ENCODE measurements at regions of chr1 and their contacts with region 1.

Region 1: DNA sequence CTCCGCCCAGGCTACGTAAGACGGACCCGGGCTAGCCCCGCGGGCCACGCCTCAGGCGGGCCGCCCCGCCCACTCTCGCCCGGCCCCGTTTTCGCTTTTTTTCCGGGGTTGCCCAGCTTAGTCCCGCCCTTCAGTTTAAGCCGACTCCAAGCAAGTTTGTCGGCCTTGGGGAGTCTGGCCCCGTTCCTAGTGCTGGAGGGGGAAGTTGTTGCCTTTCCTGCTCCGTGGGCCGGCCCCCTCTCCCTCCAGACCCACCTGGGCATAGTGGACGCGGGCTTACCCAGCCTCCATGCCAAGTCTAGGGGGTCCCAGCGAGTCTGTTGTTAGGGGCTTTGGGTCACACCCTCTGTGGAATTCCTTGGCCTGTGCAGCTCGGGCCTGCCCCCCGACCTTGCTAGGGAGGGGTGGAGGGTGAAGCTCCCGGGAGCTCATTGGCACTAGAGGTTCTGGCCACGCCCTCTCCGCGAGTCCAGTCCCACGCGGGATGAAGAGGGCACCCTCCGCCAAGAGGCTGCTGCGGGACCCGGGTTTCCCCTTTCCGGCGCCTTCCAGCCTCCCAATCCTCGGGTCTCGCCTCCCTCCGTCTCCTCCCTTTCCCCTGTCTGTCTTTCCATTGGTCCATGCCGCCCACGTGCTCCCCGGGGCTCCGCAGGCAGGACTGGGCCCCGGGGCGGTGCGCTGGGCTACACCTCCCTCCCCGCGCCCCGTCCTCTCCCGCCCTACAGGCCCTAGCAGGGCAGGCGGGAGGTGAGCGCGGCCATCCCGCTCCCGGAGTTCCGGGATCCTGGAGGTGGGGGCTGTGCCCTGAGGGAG is 3.3 kb downstream of the RUSC1 start:
- DNase-seq: peak; percentile 96
- H3K4me3 ChIP-seq: peak overlapping the region; percentile 85
- H3K27ac ChIP-seq: peak overlapping the region; percentile 99
- H3K4me1 ChIP-seq: peaks cover 55% of the 10 kb centered on the region
- H3K27me3 ChIP-seq: no peaks in the 10 kb centered on the region
- CTCF ChIP-seq: no peak

Region 2: GRCh38 chr1:155063550-155064110 is 260.4 kb before region 1 on chr1 and contains the start of gene EFNA4:
- intact Hi-C with region 1: no loop called
- DNase-seq: peak; percentile 82
- H3K4me3 ChIP-seq: peak within 1 kb of the TSS; percentile 81
- H3K27ac ChIP-seq: peak within 1 kb of the TSS; percentile 78
- H3K4me1 ChIP-seq: peaks cover 47% of the 10 kb centered on the region
- H3K27me3 ChIP-seq: no peaks in the 10 kb centered on the region
- CTCF ChIP-seq: no peak
- total RNA-seq, gene EFNA4: 1.7 TPM

Region 3: DNA sequence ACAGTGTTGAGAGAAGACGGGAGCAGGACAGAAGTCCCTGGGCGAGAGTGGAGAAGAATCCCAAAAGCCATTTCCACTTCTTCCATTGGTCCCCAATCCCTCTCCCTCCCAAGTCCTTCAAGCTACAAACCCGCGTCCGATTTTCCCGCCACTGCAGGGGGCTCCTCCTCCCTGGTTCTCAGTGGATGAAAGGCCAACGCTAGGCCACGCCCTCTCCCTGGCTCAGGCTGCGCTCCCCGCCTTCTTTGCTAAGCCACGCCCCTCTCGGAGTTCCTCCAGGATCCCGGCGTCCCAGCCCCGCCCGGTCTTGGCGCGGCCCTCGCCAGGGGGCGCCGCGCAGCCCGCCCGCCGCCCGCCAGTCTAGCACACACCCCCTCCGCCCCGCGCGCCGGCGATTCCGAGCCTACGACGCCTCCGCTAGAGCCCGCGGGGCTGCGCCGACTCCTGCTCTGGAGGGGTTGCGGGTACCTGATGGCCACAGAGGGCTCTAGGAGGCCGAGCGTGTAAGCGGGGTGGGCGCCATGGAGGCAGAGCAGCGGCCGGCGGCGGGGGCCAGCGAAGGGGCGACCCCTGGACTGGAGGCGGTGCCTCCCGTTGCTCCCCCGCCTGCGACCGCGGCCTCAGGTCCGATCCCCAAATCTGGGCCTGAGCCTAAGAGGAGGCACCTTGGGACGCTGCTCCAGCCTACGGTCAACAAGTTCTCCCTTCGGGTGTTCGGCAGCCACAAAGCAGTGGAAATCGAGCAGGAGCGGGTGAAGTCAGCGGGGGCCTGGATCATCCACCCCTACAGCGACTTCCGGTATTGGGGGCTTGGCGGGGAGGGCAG is 46.7 kb before region 1 on chr1 and contains the start of gene HCN3:
- intact Hi-C with region 1: loop called (anchors 5 kb)
- DNase-seq: peak; percentile 98
- H3K4me3 ChIP-seq: peak within 1 kb of the TSS; percentile 83
- H3K27ac ChIP-seq: peak within 1 kb of the TSS; percentile 76
- H3K4me1 ChIP-seq: peaks cover 40% of the 10 kb centered on the region
- H3K27me3 ChIP-seq: no peaks in the 10 kb centered on the region
- CTCF ChIP-seq: peak; percentile 80
- total RNA-seq, gene HCN3: 1.2 TPM

Measured in left ventricle myocardium inferior (tissue), 1 donor.